Activated T-helper 1 cell treated with anti-CD3 and anti-CD28 coated beads, Interleukin-12 subunit alpha, Interleukin-12 subunit beta, Interleukin-2, Interleukin-4 antibody, amounts not matched to agents 30 ng/mL and 10 ng/mL and 1 ng/mL, durations not matched to agents 14 hours and 24 hours and 36 hours (primary cell): ENCODE measurements at regions of chr2 and their contacts with region 1.

Region 1: GRCh38 chr2:109510136-109511028 is 103.4 kb downstream of the SEPTIN10 start:
- DNase-seq: peak; percentile 51
- H3K4me3 Mint-ChIP-seq: no peak overlapping the region
- H3K27ac Mint-ChIP-seq: no peak overlapping the region
- H3K4me1 Mint-ChIP-seq: peaks cover 9% of the 10 kb centered on the region
- H3K27me3 Mint-ChIP-seq: no peaks in the 10 kb centered on the region

Region 2: DNA sequence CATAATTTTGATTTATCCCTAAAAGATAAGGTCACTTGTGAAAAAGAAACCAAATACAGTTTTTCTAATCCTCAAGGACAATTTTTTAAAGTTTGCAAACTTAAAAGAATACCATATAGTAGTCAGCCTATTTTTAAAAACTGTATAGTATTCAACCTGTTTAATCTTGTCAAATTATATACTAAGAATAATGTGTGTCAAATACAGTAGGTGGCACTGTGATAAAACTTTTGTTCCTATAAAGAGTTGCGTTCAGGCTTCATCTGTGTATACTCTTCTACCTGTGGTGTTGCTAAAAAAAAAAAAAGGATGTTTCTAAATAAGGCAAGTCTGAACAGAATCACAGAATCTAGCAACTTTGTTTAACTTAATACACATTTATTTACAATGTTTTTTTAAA is 655.2 kb before region 1 on chr2:
- intact Hi-C with region 1: loop called (anchors 5 kb)
- DNase-seq: no peak
- H3K4me3 Mint-ChIP-seq: no peak overlapping the region
- H3K27ac Mint-ChIP-seq: no peak overlapping the region
- H3K4me1 Mint-ChIP-seq: peaks cover 7% of the 10 kb centered on the region
- H3K27me3 Mint-ChIP-seq: no peaks in the 10 kb centered on the region

Region 3: DNA sequence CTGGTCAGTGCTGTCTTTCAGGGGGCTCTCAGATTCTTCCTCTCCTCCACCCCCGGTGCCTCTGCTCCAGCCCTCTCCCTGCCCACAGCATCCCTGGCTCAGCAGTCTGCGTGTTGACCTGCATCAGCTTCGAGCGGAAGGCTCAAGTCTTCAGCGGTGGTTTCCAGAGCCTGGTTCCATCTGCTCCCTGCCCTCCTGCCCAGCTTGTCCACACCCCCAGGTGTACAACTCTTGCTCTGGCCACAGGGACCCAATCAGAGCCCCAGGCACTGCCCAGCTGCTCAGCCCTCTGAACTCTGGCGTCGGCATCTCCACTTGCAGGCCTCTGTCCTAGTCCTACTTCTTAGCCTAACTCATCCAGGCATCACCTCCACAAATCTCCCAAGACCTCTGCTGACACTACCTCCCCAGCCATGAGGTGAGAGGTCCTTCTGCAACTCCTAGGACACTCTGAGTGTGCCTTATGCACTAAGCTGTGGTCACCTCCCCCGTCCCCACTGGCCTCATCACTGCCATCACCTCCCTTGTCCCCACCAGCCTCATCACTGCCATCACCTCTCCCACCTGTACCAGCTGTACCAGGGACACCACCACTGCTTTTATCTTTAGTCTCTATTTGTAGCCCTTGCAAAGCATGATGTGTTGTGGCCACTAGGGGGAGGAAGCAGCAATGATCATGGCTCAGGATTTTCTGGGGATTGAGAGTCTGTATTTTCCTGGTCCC is 582.3 kb before region 1 on chr2:
- intact Hi-C with region 1: loop called (anchors 1 kb)
- DNase-seq: no peak
- H3K4me3 Mint-ChIP-seq: no peak overlapping the region
- H3K27ac Mint-ChIP-seq: no peak overlapping the region
- H3K4me1 Mint-ChIP-seq: no peaks in the 10 kb centered on the region
- H3K27me3 Mint-ChIP-seq: no peaks in the 10 kb centered on the region

Region 4: GRCh38 chr2:109031476-109032228 is 478.7 kb before region 1 on chr2:
- intact Hi-C with region 1: loop called (anchors 10 kb)
- DNase-seq: peak; percentile 38
- H3K4me3 Mint-ChIP-seq: peak overlapping the region; percentile 86
- H3K27ac Mint-ChIP-seq: peak overlapping the region; percentile 89
- H3K4me1 Mint-ChIP-seq: peaks cover 27% of the 10 kb centered on the region
- H3K27me3 Mint-ChIP-seq: no peaks in the 10 kb centered on the region

Region 5: GRCh38 chr2:109331896-109332848 is 178.2 kb before region 1 on chr2:
- intact Hi-C with region 1: loop called (anchors 10 kb)
- DNase-seq: peak; percentile 12
- H3K4me3 Mint-ChIP-seq: peak overlapping the region; percentile 76
- H3K27ac Mint-ChIP-seq: peak overlapping the region; percentile 6
- H3K4me1 Mint-ChIP-seq: peaks cover 29% of the 10 kb centered on the region
- H3K27me3 Mint-ChIP-seq: peaks cover 32% of the 10 kb centered on the region